ENCODE measurements at regions of chr12 and their contacts with region 1.

Region 1: DNA sequence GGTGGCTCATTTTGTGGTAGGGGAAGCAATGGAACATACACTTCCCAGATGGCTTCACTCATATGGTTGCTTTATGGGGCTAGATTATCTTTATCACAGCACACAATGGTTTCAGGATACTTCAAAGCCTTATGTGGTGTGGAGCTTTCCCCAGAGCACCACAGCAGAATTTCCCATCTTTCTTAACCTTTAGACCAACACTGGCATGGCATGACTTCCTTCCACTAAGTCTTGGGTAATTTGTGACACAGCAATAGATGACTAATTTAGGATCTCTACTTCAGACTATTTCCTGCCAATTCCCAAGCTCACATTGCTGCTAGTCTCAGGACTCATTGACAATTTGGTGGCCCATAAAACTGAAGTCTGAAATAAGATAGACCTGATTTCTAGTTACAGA is 36.9 kb upstream of the DCN start:
- DNase-seq: no peak
- H3K4me3 ChIP-seq: no peak overlapping the region
- H3K27ac ChIP-seq: no peak overlapping the region
- H3K4me1 ChIP-seq: no peaks in the 10 kb centered on the region
- H3K27me3 ChIP-seq: no peaks in the 10 kb centered on the region
- CTCF ChIP-seq: no peak
- POLR2A ChIP-seq: no peak

Region 2: GRCh38 chr12:89685363-89685972 is 1534.0 kb before region 1 on chr12:
- intact Hi-C with region 1: loop called (anchors 10 kb)
- DNase-seq: no peak
- H3K4me3 ChIP-seq: no peak overlapping the region
- H3K27ac ChIP-seq: no peak overlapping the region
- H3K4me1 ChIP-seq: no peaks in the 10 kb centered on the region
- H3K27me3 ChIP-seq: no peaks in the 10 kb centered on the region
- CTCF ChIP-seq: no peak
- POLR2A ChIP-seq: no peak

Region 3: DNA sequence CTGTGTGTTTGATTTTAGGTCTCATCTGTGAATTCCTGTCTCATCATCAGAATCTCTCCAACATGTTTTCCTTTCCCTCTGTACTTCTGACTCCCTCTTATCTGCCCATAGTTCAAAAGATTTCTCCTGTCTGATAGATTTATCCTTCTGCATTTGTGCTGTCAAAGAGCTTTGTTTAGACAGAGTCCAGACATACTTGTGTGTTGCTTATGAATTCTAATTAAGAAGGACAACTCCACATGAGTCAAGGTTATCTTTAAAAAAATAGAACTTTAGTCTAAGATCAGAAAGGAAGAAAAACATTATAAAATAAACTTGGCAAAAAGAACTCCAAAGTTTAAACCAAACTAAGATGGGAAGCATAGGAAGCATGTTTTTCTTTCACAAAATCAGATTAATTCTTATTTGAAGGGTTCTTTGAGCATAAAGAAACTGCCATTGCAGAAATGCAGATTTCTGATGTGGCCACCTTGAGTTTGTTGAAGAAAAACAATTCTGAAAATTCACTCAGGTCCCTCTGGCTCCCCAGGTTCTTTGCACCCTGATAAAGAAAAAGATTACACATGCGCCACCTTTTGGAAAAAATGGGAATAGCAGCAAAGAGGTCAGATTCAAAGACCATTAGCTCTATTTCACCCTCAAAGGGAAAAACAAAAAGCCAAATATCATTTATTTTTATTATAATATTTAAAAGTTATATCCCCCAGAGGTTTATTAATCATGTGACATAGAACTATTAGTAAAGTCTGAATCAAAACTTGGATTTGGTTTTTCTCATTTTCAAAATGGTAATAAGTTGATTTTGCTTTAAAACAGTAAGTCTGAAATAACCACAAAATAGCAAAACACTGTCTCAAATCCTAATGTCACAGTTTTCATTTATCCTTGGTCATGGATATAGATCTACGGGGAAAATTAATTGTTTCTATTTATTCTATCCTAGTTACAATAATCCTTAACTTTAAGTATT is 106.8 kb after region 1 on chr12:
- intact Hi-C with region 1: no loop called
- DNase-seq: no peak
- H3K4me3 ChIP-seq: peak overlapping the region in 2 of 3 donors; percentile 2 to 27
- H3K27ac ChIP-seq: peak overlapping the region; percentile 24 to 61
- H3K4me1 ChIP-seq: no peaks in the 10 kb centered on the region
- H3K27me3 ChIP-seq: no peaks in the 10 kb centered on the region
- CTCF ChIP-seq: peak; percentile 50 to 69 (median 51)
- POLR2A ChIP-seq: no peak

Measured in breast epithelium (tissue), 4 donors.